ENCODE measurements at regions of chr9 and their contacts with region 1.

Region 1: DNA sequence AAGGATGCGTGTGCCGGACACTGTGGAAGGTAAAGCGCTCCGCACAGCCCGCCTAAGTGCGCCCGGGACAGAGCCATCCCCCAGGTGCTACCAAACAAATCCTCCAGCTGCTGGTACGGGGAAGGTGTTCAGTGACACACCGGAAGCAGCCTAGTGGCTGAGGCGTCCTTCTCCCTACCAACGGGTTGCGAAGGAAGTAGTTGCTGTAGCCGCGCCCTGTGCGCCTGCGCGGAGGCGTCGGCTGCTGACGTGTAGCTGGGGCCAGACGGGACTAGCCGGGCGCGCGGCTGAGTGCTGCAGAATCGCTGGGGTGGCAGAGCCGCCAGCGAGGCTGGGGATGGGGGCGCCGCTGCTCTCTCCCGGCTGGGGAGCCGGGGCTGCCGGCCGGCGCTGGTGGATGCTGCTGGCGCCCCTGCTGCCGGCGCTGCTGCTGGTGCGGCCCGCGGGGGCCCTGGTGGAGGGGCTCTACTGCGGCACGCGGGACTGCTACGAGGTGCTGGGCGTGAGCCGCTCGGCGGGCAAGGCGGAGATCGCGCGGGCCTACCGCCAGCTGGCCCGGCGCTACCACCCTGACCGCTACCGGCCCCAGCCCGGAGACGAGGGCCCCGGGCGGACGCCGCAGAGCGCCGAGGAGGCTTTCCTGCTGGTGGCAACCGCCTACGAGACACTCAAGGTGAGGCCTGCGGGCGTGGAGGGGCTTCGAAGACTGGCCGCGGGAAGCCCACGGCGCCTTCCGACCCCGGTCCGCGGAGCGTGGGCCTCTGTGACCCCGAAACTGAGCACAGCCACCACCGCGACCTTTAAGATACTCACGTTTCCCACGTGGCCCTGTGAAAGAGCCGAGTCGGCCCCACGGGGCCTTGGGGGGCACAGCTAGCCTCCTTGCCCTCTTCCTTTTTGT is at the start of gene DNAJC25:
- DNase-seq: peak; percentile 94 to 98 (median 97)
- ATAC-seq: peak; percentile 97
- H3K4me3 ChIP-seq: peak within 1 kb of the TSS; percentile 82
- H3K4me3 Mint-ChIP-seq: peak within 1 kb of the TSS; percentile 81 to 99 (median 94)
- H3K27ac ChIP-seq: peak within 1 kb of the TSS; percentile 83
- H3K27ac Mint-ChIP-seq: peak within 1 kb of the TSS; percentile 78 to 95 (median 89)
- H3K4me1 ChIP-seq: peaks cover 14 to 21% of the 10 kb centered on the region in 2 donors
- H3K4me1 Mint-ChIP-seq: peaks cover 29 to 57% (median 47%) of the 10 kb centered on the region in 7 donors
- H3K27me3 ChIP-seq: no peaks in the 10 kb centered on the region
- H3K27me3 Mint-ChIP-seq: no peaks in the 10 kb centered on the region
- total RNA-seq, gene DNAJC25: 4.0 to 6.0 (median 5.2) TPM

Region 2: GRCh38 chr9:111661150-111661801 is 30.0 kb after region 1 on chr9 and contains the start of gene GNG10:
- CTCF ChIA-PET with region 1: interaction called, 3 read pairs
- POLR2A ChIA-PET with region 1: interaction called, 11 read pairs
- intact Hi-C with region 1: loop called (anchors 1 kb)
- DNase-seq: peak; percentile 57 to 79 (median 68)
- ATAC-seq: peak; percentile 95
- H3K4me3 ChIP-seq: peak within 1 kb of the TSS; percentile 70
- H3K4me3 Mint-ChIP-seq: peak within 1 kb of the TSS; percentile 87 to 97 (median 93)
- H3K27ac ChIP-seq: peak within 1 kb of the TSS; percentile 71
- H3K27ac Mint-ChIP-seq: peak within 1 kb of the TSS; percentile 82 to 97 (median 92)
- H3K4me1 ChIP-seq: peaks cover 18 to 31% of the 10 kb centered on the region in 2 donors
- H3K4me1 Mint-ChIP-seq: peaks cover 16 to 44% (median 32%) of the 10 kb centered on the region in 7 donors
- H3K27me3 ChIP-seq: no peaks in the 10 kb centered on the region
- H3K27me3 Mint-ChIP-seq: no peaks in the 10 kb centered on the region
- total RNA-seq, gene GNG10: 5.3 to 26.1 (median 12.2) TPM

Region 3: DNA sequence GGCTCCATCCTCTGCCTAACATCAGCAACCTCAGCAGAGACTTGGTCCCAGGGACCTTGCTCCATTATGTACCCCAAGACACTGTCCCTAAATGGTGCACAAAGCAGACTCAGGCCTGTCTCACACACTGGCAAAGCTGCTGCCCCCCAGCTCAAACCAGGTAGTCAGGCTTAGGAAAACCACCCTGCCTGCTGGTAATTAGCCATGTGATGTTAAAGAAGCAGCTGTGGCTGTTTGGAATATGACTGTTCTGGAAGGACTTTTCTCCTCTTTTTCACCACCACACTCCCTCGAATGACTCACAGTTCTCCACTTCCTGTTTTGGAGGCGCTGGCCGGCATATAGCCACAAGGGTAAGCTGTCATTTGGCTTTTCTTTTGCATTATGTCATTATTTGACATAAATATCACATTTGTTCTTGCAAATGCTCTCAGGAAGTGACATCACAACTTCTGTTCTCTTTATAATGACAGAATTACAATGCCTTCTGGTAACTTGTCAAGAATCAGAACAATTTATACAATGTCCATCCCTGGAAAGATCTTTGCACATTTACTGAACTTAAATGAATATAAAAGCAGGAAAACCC is 429.9 kb after region 1 on chr9:
- CTCF ChIA-PET with region 1: no interaction called
- POLR2A ChIA-PET with region 1: no interaction called
- intact Hi-C with region 1: loop called in 1 of 2 experiments (anchors 5 kb)
- DNase-seq: peak in 3 of 9 donors; percentile 10 to 50 (median 10)
- ATAC-seq: peak; percentile 85
- H3K4me3 ChIP-seq: no peak overlapping the region
- H3K4me3 Mint-ChIP-seq: peak overlapping the region in 1 of 10 donors; percentile 43
- H3K27ac ChIP-seq: no peak overlapping the region
- H3K27ac Mint-ChIP-seq: peak overlapping the region in 3 of 9 donors; percentile 20 to 53 (median 33)
- H3K4me1 ChIP-seq: peaks cover 0 to 5% of the 10 kb centered on the region in 2 donors
- H3K4me1 Mint-ChIP-seq: peaks cover 9 to 32% (median 25%) of the 10 kb centered on the region in 7 donors
- H3K27me3 ChIP-seq: no peaks in the 10 kb centered on the region
- H3K27me3 Mint-ChIP-seq: no peaks in the 10 kb centered on the region

Region 4: DNA sequence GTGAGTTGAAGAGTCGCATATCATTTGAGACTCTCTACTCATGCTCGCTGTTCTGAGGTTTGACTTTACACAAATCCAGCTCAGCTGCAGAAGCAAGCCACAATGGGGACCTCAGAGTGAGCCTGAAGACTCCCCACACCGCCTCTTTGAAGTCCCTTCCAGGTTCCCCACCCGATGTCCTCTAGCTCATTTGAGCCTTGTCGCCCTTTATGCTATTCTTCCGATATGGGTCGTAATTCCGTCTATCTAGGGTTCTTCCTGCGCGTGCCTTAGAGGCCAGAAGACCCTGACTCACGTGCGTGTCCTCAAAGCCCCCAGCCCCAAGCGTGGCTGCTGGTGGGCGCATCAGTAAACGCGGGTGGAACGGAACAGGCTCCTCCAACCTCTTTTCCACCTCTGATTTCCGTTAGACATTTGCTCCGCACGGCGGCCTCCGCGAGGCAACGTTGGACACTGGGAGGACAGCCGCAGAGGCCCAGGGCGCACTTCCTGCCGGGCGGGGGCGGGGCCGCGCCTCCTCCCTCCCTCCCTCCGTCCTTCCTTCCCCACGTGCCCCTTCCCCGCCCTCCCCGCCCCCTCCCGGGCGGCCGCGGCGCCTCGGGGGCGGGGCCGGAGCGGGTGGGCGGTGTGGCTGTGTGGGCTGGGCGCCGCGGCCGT is 1118.9 kb after region 1 on chr9 and contains the start of gene SNX30:
- CTCF ChIA-PET with region 1: no interaction called
- POLR2A ChIA-PET with region 1: interaction called, 3 read pairs
- intact Hi-C with region 1: loop called (anchors 1 to 2 kb)
- DNase-seq: peak; percentile 66 to 83 (median 75)
- ATAC-seq: peak; percentile 94
- H3K4me3 ChIP-seq: peak within 1 kb of the TSS; percentile 70
- H3K4me3 Mint-ChIP-seq: peak within 1 kb of the TSS; percentile 88 to 94 (median 92)
- H3K27ac ChIP-seq: peak within 1 kb of the TSS; percentile 68
- H3K27ac Mint-ChIP-seq: peak within 1 kb of the TSS; percentile 88 to 98 (median 96)
- H3K4me1 ChIP-seq: peaks cover 46% of the 10 kb centered on the region in 2 donors
- H3K4me1 Mint-ChIP-seq: peaks cover 39 to 66% (median 60%) of the 10 kb centered on the region in 7 donors
- H3K27me3 ChIP-seq: no peaks in the 10 kb centered on the region
- H3K27me3 Mint-ChIP-seq: peaks cover 0 to 4% (median 0%) of the 10 kb centered on the region in 5 donors
- total RNA-seq, gene SNX30: 6.6 to 15.8 (median 9.2) TPM